Psoas muscle (tissue), 8 donors: ENCODE measurements at regions of chr10 and their contacts with region 1.

Region 1: DNA sequence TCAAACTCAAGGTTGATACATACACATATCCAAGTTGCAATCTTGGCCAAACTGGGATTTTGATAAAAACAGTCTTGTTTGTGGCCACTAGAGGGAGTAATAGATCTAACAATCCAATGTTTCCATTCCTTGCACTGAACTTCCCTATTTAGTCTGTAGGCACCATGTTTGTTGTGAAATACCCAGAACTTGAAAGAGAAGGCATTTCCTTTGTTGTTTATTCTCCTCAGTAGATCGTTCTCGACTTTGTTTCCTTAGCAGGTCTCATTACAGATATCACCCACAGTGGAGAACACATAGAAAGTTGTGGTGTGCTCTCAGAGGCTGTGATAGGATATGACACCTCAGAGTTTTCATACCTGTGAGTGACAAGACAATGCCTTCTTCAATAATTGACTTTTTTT is 70.3 kb upstream of the MXI1 start:
- DNase-seq: no peak
- ATAC-seq: peak; percentile 83 to 94 (median 88)
- H3K4me3 ChIP-seq: no peak overlapping the region
- H3K27ac ChIP-seq: peak overlapping the region; percentile 19
- H3K4me1 ChIP-seq: peaks cover 3% of the 10 kb centered on the region
- H3K27me3 ChIP-seq: no peaks in the 10 kb centered on the region
- CTCF ChIP-seq: peak; percentile 85

Region 2: GRCh38 chr10:109894516-109894915 is 242.6 kb before region 1 on chr10:
- intact Hi-C with region 1: loop called in 1 of 2 experiments (anchors 5 kb)
- DNase-seq: peak; percentile 86 to 92
- ATAC-seq: peak; percentile 90 to 95 (median 92)
- H3K4me3 ChIP-seq: peak overlapping the region; percentile 14
- H3K27ac ChIP-seq: peak overlapping the region; percentile 68
- H3K4me1 ChIP-seq: peaks cover 41% of the 10 kb centered on the region
- H3K27me3 ChIP-seq: no peaks in the 10 kb centered on the region
- CTCF ChIP-seq: no peak

Region 3: GRCh38 chr10:110101464-110102144 is 35.5 kb before region 1 on chr10:
- intact Hi-C with region 1: no loop called
- DNase-seq: no peak
- ATAC-seq: no peak
- H3K4me3 ChIP-seq: no peak overlapping the region
- H3K27ac ChIP-seq: no peak overlapping the region
- H3K4me1 ChIP-seq: no peaks in the 10 kb centered on the region
- H3K27me3 ChIP-seq: no peaks in the 10 kb centered on the region
- CTCF ChIP-seq: no peak

Region 4: DNA sequence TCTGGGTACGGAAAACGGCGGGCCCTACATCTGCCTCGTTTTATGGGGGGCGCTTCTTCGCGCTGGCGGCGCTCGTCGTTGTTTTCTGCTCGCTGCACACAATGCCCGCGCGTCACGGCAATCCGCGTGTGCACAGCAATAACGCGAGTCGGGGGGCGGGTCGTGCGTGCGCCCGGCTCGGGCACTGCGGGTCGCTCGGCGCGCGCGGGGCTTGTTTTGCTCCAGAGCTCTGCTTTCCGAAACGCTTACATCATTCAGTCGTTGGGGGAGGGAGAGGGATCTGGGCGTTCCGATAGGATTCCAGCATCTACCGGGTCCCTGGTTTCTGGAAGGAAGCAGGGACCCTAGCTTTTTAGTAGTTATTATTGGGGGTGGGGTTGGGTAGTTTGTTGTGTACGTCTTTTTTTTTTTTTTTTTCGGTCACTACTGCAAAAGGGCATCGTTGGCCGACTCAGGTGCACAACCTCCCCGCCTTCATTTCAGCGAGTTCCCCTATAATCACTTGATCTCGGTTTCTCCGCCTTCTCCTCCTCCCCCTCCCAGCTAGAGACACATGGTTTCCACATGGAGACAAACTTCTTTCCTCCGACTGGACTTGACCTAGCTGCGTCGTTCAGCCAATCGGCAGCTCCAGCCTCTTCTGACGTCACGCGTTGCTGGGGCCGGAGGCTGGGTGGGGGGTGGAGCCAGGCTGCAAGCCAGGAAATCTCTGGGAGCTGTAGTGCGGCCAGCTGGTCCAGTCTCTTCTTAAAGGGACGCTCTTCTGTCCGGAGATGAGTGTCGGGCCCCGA is 73.7 kb after region 1 on chr10:
- intact Hi-C with region 1: loop called (anchors 5 kb)
- DNase-seq: peak; percentile 94 to 99
- ATAC-seq: peak; percentile 91 to 93 (median 92)
- H3K4me3 ChIP-seq: peak overlapping the region; percentile 94
- H3K27ac ChIP-seq: peak overlapping the region; percentile 98
- H3K4me1 ChIP-seq: peaks cover 18% of the 10 kb centered on the region
- H3K27me3 ChIP-seq: no peaks in the 10 kb centered on the region
- CTCF ChIP-seq: no peak

Region 5: GRCh38 chr10:110225756-110226542 is 88.8 kb after region 1 on chr10:
- intact Hi-C with region 1: loop called in 1 of 2 experiments (anchors 5 kb)
- DNase-seq: peak; percentile 91 to 95
- ATAC-seq: peak; percentile 73 to 78 (median 77)
- H3K4me3 ChIP-seq: peak overlapping the region; percentile 96
- H3K27ac ChIP-seq: peak overlapping the region; percentile 99
- H3K4me1 ChIP-seq: peaks cover 23% of the 10 kb centered on the region
- H3K27me3 ChIP-seq: no peaks in the 10 kb centered on the region
- CTCF ChIP-seq: peak; percentile 77

Region 6: DNA sequence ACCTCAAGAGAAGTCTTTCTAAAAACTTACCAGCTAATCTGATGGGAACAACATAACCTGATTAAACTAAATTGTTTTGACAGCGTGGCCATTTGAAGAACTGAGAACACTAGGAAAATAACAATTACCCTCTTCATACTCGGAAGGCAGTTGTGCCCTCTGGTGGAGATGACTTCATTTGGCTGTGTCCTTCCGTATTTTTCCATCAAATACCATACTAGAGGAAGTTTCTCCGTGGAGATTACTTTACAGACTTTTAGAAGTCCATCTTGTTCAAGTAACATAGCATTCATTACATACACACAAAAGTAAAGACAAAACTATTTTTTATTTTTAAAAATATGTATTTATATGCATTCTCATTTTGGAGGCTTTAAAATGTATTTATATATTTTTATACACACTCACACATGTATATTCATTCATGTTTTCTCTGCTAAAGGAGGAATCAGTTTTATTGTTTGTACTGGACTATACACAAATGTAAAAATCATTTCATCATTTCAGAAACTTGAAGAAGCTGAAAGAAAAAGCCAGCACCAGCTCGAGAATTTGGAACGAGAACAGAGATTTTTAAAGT is 142.4 kb after region 1 on chr10:
- intact Hi-C with region 1: loop called (anchors 1 to 2 kb)
- DNase-seq: peak in 1 of 2 donors; percentile 30
- ATAC-seq: peak in 3 of 4 donors; percentile 71 to 87 (median 79)
- H3K4me3 ChIP-seq: no peak overlapping the region
- H3K27ac ChIP-seq: no peak overlapping the region
- H3K4me1 ChIP-seq: peaks cover 39% of the 10 kb centered on the region
- H3K27me3 ChIP-seq: no peaks in the 10 kb centered on the region
- CTCF ChIP-seq: peak; percentile 77

Region 7: GRCh38 chr10:110425684-110426293 is 288.6 kb after region 1 on chr10:
- intact Hi-C with region 1: no loop called
- DNase-seq: peak in 1 of 2 donors; percentile 10
- ATAC-seq: no peak
- H3K4me3 ChIP-seq: no peak overlapping the region
- H3K27ac ChIP-seq: no peak overlapping the region
- H3K4me1 ChIP-seq: no peaks in the 10 kb centered on the region
- H3K27me3 ChIP-seq: no peaks in the 10 kb centered on the region
- CTCF ChIP-seq: no peak

Region 8: DNA sequence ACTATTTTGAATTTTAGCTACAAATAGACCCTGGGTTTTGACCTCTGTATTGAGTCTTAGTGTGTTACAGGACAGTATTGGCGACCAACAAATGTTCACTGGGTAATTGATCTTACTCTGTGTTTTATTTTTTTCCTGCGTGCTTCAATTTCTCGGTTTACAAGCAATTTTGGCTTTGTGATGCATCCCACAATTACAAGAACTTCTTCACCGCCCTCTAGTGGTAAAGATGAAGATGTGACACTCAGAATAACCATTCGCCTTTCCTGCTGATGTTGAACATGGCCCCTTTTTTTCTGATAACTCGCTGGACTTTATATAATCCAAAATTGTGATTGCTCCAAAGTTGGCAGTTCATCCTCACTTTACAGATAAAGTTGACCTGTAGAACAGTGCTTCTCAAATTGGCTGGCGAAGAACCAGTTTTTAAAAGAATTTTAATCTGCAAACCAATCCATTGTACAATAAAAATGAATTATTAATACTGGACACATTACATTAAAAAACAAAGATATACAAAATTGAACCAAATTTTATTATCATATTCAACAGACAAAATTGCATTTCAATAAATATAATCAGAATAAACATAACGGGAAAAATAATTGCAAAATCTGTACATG is 410.1 kb after region 1 on chr10:
- intact Hi-C with region 1: loop called in 1 of 2 experiments (anchors 5 kb)
- DNase-seq: no peak
- ATAC-seq: peak in 3 of 4 donors; percentile 57 to 78 (median 59)
- H3K4me3 ChIP-seq: no peak overlapping the region
- H3K27ac ChIP-seq: no peak overlapping the region
- H3K4me1 ChIP-seq: no peaks in the 10 kb centered on the region
- H3K27me3 ChIP-seq: peaks cover 0 to 13% (median under 1%) of the 10 kb centered on the region in 3 donors
- CTCF ChIP-seq: peak; percentile 84

Region 9: DNA sequence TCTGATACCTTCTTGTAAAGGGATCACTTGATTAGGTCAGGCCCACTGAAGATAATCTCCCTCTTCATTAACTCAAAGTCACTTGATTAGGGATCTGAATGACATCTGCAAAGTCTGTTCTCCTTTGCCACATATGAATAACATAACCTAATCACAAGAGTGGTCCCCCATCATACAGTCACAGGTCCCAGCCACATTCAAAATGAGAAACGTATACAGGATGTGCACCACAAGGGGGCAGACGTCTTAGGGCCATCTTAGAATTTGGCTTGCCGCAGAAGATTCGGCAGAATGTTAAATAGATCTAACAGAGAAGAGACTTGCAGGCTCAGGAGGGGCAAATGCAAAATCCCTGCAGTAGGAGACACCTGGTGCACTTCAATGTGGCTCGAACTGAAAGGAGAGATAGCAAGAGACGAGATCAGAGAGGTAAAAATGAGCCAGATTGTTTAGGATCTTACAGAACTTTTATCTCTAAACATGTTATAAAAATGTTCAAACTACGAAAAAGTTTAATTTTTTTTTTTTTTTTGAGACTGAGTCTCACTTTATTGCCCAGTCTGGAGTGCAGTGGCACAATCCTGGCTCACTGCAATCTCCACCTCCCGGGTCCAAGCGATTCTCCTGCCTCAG is 419.9 kb after region 1 on chr10:
- intact Hi-C with region 1: loop called in 1 of 2 experiments (anchors 5 kb)
- DNase-seq: no peak
- ATAC-seq: peak in 2 of 4 donors; percentile 57 to 69
- H3K4me3 ChIP-seq: no peak overlapping the region
- H3K27ac ChIP-seq: no peak overlapping the region
- H3K4me1 ChIP-seq: no peaks in the 10 kb centered on the region
- H3K27me3 ChIP-seq: peaks cover 0 to 3% (median 3%) of the 10 kb centered on the region in 3 donors
- CTCF ChIP-seq: peak; percentile 65